Caco-2 (cell line): ENCODE measurements at regions of chr9 and their contacts with region 1.

Region 1: DNA sequence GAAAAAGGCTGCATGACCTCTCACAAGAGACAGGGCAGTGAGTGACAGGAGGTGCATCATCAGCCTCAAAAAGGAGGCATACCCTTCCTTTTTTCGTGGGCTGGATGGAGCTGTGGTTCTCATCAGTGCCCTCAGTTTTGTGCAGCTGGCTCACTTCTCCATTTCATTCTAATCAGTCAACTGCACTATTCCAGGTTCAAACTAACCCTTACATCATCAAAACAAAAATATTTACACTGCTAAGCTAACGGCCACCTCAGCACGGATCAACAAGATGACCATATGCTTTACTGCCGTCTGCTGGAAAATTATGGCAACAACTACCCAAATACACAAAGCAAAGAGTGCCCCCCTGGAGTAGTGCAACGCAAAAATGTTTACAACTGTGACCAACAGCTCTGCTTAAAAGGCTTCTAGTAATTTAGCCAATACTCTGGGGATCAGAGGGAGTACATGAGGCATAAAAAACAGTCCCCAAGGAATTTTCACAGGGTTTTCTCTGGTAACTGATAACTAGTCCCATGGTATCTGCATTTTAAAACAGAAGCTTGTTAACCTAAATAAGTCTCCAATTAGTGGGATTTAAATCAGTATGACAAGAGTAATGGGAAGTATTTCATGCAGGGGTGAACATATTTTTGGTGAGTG is 10.8 kb downstream of the KCNV2 start:
- DNase-seq: peak in 1 of 2 experiments; percentile 16
- H3K4me3 ChIP-seq: no peak overlapping the region
- H3K4me3 Mint-ChIP-seq: no peak overlapping the region
- H3K27ac Mint-ChIP-seq: no peak overlapping the region
- H3K4me1 ChIP-seq: peaks cover 15% of the 10 kb centered on the region
- H3K4me1 Mint-ChIP-seq: peaks cover 5% of the 10 kb centered on the region
- H3K27me3 ChIP-seq: no peaks in the 10 kb centered on the region
- H3K27me3 Mint-ChIP-seq: no peaks in the 10 kb centered on the region
- CTCF ChIP-seq: peak in 1 of 2 experiments; percentile 45

Region 2: DNA sequence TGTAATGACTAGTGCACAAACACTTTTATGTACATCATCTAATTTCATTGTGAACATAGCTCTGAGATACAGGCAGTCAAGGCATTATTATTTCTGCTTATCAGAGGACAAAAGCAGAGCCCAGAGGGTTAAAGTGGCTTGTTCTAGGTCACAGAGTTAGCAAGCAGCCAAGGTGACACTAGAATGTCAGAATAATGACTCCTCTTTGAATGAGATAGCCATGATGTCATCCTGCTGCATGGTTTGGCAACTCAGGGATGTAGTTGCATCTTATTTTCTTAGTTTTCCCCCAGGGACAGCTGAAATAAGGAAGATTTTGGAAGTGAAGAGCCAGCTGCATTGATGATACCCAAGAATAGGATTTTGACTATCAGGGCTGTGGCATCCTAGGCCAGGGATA is 43.6 kb after region 1 on chr9:
- CTCF ChIA-PET with region 1: no interaction called
- POLR2A ChIA-PET with region 1: no interaction called
- intact Hi-C with region 1: loop called (anchors 5 kb)
- DNase-seq: peak in 1 of 2 experiments; percentile 11
- H3K4me3 ChIP-seq: no peak overlapping the region
- H3K4me3 Mint-ChIP-seq: peak overlapping the region; percentile 30
- H3K27ac Mint-ChIP-seq: peak overlapping the region; percentile 51
- H3K4me1 ChIP-seq: peaks cover 28% of the 10 kb centered on the region
- H3K4me1 Mint-ChIP-seq: peaks cover 28% of the 10 kb centered on the region
- H3K27me3 ChIP-seq: no peaks in the 10 kb centered on the region
- H3K27me3 Mint-ChIP-seq: no peaks in the 10 kb centered on the region
- CTCF ChIP-seq: no peak

Region 3: DNA sequence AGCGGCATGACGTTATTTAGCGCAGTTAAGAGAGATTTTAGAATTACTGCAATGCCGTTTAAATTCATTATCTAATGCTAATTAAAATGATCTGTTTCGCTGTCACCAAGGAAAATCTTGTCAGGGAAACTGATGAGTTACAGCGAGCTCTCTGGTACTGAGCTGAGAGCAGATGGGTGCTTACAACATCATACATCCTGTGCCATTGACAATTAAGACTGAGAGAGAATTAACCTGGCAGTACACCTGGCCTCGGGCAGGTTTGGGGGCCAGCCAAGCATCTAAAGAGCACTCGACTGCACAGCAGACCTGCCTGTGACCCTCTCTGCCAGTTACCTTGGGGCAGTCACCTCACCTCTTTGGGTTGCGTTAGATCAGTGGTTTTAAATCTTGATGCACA is 60.8 kb after region 1 on chr9:
- CTCF ChIA-PET with region 1: no interaction called
- POLR2A ChIA-PET with region 1: no interaction called
- intact Hi-C with region 1: no loop called
- DNase-seq: no peak
- H3K4me3 ChIP-seq: no peak overlapping the region
- H3K4me3 Mint-ChIP-seq: no peak overlapping the region
- H3K27ac Mint-ChIP-seq: no peak overlapping the region
- H3K4me1 ChIP-seq: no peaks in the 10 kb centered on the region
- H3K4me1 Mint-ChIP-seq: no peaks in the 10 kb centered on the region
- H3K27me3 ChIP-seq: no peaks in the 10 kb centered on the region
- H3K27me3 Mint-ChIP-seq: no peaks in the 10 kb centered on the region
- CTCF ChIP-seq: no peak

Region 4: DNA sequence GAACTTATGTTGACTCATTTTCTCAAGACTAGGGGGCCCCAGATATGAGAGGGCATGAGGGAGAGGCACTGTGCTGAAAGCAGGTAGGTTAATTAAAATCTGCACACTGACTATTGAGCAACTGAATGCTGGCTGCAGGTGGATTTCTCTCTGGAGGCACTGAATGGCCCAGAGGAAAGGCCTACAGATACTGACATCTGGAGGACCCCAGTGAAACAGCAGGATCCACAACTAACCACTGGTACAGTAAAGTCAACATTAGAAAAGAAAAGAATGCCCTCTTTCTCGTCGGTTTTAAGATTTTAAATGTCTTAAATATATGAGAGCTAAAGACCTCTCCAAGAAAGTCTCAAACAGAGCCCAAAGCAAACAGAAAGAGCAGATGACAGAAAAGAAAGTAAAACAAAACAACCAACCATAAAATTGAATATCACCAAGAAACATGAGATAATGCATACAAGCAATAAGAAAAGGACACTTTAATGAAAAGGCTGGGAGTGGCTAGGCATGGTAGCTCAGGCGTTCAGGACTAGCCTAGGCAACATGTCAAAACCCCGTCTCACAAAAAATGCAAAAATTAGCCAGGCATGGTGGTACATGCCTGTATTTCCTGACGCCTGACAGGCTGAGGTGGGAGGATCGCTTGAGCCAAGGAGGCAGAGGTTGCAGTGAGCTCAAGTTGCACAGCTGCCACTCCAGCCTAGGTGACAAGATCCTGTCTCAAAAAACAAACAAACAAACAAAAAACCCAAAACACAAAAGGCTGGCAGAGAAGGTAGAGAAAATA is 72.5 kb after region 1 on chr9:
- CTCF ChIA-PET with region 1: no interaction called
- POLR2A ChIA-PET with region 1: no interaction called
- intact Hi-C with region 1: loop called (anchors 5 kb)
- DNase-seq: peak in 1 of 2 experiments; percentile 37
- H3K4me3 ChIP-seq: no peak overlapping the region
- H3K4me3 Mint-ChIP-seq: no peak overlapping the region
- H3K27ac Mint-ChIP-seq: peak overlapping the region; percentile 42
- H3K4me1 ChIP-seq: no peaks in the 10 kb centered on the region; the same call in 1 of the 2 replicates
- H3K4me1 Mint-ChIP-seq: peaks cover 26% of the 10 kb centered on the region
- H3K27me3 ChIP-seq: no peaks in the 10 kb centered on the region
- H3K27me3 Mint-ChIP-seq: no peaks in the 10 kb centered on the region
- CTCF ChIP-seq: peak in 1 of 2 experiments; percentile 41